Calu3 (cell line): ENCODE measurements at regions of chr21 and their contacts with region 1.

Region 1: DNA sequence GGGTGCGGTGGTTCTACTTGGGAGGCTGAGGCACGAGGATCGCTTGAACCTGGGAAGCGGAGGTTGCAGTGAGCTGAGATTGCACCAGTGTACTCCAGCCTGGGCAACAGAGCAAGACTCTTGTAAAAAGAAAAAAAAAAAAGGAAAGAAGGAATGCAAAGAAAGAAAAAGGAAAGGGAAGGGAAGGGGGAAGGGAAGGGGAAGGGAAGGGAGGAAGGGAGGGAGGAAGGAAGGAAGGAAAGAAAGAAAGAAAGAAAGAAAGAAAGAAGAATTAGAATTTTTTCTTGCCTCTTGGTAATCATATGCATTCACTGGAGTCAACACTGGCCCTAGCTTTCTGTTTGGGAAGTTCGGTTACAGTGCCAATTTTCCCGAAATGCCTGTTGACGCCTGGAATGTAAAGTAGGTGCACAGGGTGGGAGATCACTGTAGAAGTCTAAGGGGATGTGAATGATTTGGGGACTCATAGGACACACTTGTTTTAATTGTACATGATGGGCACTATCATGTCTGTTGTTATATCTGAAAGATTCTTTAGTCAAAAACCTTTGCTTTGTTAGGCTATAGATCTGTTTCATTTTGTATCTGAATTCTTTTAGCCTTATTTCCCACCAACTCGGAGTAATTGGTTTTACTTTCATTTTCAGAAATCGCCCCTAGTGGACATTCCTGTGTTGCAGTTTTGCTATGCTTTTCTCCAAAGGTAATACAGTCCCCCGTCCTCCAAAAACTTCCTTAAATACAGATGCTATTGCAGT is 59.8 kb upstream of the MORC3 start:
- DNase-seq: peak; percentile 48
- H3K4me3 Mint-ChIP-seq: peak overlapping the region; percentile 54
- H3K27ac Mint-ChIP-seq: no peak overlapping the region
- H3K4me1 Mint-ChIP-seq: no peaks in the 10 kb centered on the region
- H3K27me3 Mint-ChIP-seq: no peaks in the 10 kb centered on the region
- CTCF ChIP-seq: peak; percentile 41

Region 2: GRCh38 chr21:35428489-35428888 is 831.7 kb before region 1 on chr21:
- CTCF ChIA-PET with region 1: no interaction called
- intact Hi-C with region 1: no loop called
- DNase-seq: no peak
- H3K4me3 Mint-ChIP-seq: no peak overlapping the region
- H3K27ac Mint-ChIP-seq: no peak overlapping the region
- H3K4me1 Mint-ChIP-seq: no peaks in the 10 kb centered on the region
- H3K27me3 Mint-ChIP-seq: no peaks in the 10 kb centered on the region
- CTCF ChIP-seq: no peak

Region 3: DNA sequence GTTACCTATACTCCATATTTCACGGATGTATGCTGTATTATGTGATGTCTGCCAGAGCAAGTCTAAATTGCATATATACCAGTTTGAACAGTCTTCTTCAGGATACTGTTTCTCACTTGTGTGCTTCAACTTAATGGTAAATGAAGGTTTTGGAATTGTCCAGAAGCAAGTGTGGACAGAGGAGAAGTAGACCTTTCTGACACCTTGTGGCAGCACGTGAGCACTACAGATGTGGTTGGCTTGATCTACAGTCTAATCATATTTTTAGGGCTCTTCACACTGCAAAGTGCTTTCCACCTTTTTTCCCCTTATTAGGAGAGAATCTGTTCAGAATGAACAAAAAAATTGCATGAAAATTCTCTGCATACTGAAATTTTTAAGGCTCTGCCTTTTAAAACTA is 70.7 kb after region 1 on chr21:
- CTCF ChIA-PET with region 1: no interaction called
- intact Hi-C with region 1: loop called (anchors 5 kb)
- DNase-seq: peak; percentile 31
- H3K4me3 Mint-ChIP-seq: no peak overlapping the region
- H3K27ac Mint-ChIP-seq: no peak overlapping the region
- H3K4me1 Mint-ChIP-seq: peaks cover 12% of the 10 kb centered on the region
- H3K27me3 Mint-ChIP-seq: no peaks in the 10 kb centered on the region
- CTCF ChIP-seq: peak; percentile 22

Region 4: DNA sequence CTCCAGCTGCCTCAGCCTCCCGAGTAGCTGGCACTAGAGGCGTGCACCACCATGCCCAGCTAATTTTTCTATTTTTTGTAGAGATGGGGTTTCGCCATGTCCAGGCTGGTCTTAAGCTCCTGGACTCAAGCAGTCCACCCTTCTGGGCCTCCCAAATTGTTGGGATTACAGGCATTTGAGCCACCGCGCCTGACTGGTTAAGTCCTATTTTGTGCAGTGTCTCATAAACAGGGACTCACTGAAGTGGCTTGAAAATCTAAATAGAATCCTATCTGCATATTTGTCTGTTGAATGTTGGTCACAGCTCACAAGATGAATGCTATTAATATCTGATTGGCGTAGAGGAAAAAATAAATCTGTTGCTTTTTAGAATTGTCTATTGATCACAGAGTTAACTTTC is 119.0 kb after region 1 on chr21:
- CTCF ChIA-PET with region 1: no interaction called
- intact Hi-C with region 1: no loop called
- DNase-seq: no peak
- H3K4me3 Mint-ChIP-seq: no peak overlapping the region
- H3K27ac Mint-ChIP-seq: no peak overlapping the region
- H3K4me1 Mint-ChIP-seq: peaks cover 11% of the 10 kb centered on the region
- H3K27me3 Mint-ChIP-seq: no peaks in the 10 kb centered on the region
- CTCF ChIP-seq: no peak